CD8-positive, alpha-beta T cell (primary cell): ENCODE measurements at regions of chr10 and their contacts with region 1.

Region 1: GRCh38 chr10:95907456-95908253 is at the start of gene CC2D2B:
- DNase-seq: peak; percentile 21 to 79 (median 59)
- ATAC-seq: peak; percentile 72
- H3K4me3 ChIP-seq: peak within 1 kb of the TSS; percentile 77 to 82
- H3K4me3 Mint-ChIP-seq: peak within 1 kb of the TSS; percentile 90
- H3K27ac ChIP-seq: peak within 1 kb of the TSS; percentile 61 to 67
- H3K27ac Mint-ChIP-seq: peak within 1 kb of the TSS; percentile 83
- H3K4me1 ChIP-seq: no peaks in the 10 kb centered on the region
- H3K4me1 Mint-ChIP-seq: peaks cover 18% of the 10 kb centered on the region
- H3K27me3 ChIP-seq: no peaks in the 10 kb centered on the region
- H3K27me3 Mint-ChIP-seq: no peaks in the 10 kb centered on the region
- CTCF ChIP-seq: no peak
- total RNA-seq, gene CC2D2B: not detected

Region 2: GRCh38 chr10:95391581-95392216 is 516.0 kb before region 1 on chr10:
- CTCF ChIA-PET with region 1: no interaction called
- POLR2A ChIA-PET with region 1: no interaction called
- intact Hi-C with region 1: no loop called
- DNase-seq: no peak
- ATAC-seq: no peak
- H3K4me3 ChIP-seq: no peak overlapping the region
- H3K4me3 Mint-ChIP-seq: no peak overlapping the region
- H3K27ac ChIP-seq: no peak overlapping the region
- H3K27ac Mint-ChIP-seq: no peak overlapping the region
- H3K4me1 ChIP-seq: no peaks in the 10 kb centered on the region
- H3K4me1 Mint-ChIP-seq: no peaks in the 10 kb centered on the region
- H3K27me3 ChIP-seq: no peaks in the 10 kb centered on the region
- H3K27me3 Mint-ChIP-seq: peaks cover 2% of the 10 kb centered on the region
- CTCF ChIP-seq: no peak

Region 3: GRCh38 chr10:95998255-95998784 is 90.7 kb after region 1 on chr10:
- CTCF ChIA-PET with region 1: no interaction called
- POLR2A ChIA-PET with region 1: no interaction called
- intact Hi-C with region 1: no loop called
- DNase-seq: no peak
- ATAC-seq: no peak
- H3K4me3 ChIP-seq: no peak overlapping the region
- H3K4me3 Mint-ChIP-seq: no peak overlapping the region
- H3K27ac ChIP-seq: no peak overlapping the region
- H3K27ac Mint-ChIP-seq: no peak overlapping the region
- H3K4me1 ChIP-seq: no peaks in the 10 kb centered on the region
- H3K4me1 Mint-ChIP-seq: no peaks in the 10 kb centered on the region
- H3K27me3 ChIP-seq: no peaks in the 10 kb centered on the region
- H3K27me3 Mint-ChIP-seq: no peaks in the 10 kb centered on the region
- CTCF ChIP-seq: no peak

Region 4: DNA sequence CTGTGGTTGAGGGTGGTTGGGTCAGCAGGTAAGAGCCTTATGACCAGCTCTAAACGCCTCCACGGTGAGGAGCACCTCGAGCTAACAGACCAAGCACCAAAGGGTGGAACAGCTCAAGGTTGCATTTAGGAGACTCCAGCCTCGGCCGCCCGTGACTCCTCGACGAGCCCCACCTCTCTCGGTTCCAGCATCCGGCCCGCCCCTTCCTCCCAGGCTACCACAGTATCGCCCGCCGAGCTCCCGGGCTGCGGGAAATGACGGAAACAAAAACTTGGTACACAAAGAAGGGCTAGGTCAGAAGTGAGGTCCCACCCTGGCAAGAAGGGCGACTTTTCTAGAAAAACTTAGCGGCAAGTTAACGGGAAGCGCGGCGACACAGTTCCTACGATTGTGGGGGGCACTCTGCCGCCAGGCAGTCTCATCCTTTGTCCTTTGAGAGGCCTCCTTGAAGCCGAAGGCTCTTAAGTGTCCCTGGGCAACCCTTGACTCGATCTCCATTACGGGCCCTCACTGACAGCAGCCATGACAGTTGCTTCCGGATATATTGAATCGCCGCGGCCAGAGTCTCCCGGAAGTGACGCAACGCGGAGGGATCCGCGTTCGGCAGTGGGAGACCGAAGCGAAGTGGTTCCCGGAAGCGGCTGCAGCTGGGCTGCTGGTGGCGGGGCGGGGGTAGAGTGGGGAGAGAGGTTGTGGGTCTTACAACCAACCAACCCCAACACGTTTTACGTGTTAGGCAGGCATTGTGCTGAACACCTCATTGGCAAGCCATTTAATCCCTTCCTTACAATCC is 182.2 kb after region 1 on chr10:
- CTCF ChIA-PET with region 1: no interaction called
- POLR2A ChIA-PET with region 1: no interaction called
- intact Hi-C with region 1: loop called (anchors 5 kb)
- DNase-seq: peak; percentile 85 to 98 (median 92)
- ATAC-seq: peak; percentile 87
- H3K4me3 ChIP-seq: peak overlapping the region; percentile 69 to 71
- H3K4me3 Mint-ChIP-seq: peak overlapping the region; percentile 95
- H3K27ac ChIP-seq: peak overlapping the region; percentile 91 to 97
- H3K27ac Mint-ChIP-seq: peak overlapping the region; percentile 99
- H3K4me1 ChIP-seq: peaks cover 6% of the 10 kb centered on the region
- H3K4me1 Mint-ChIP-seq: peaks cover 12% of the 10 kb centered on the region
- H3K27me3 ChIP-seq: no peaks in the 10 kb centered on the region
- H3K27me3 Mint-ChIP-seq: peaks cover 21% of the 10 kb centered on the region
- CTCF ChIP-seq: no peak

Region 5: DNA sequence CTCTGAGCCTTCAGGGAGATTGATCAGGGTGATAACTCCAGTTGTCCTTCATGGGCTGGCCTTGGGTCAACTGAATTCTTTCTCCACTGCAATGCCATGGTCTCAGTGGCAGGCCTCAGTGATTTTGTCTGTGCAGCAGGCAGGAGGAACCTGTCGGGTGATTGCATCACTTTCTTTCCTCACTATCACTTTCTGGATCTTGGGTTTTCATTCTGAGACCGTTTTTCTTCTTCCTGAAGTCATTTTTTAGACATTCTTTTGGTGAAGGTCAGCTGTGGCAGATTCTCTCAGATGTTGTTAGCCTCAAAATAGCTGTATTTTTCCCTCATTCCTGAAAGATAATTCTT is 895.6 kb after region 1 on chr10:
- CTCF ChIA-PET with region 1: no interaction called
- POLR2A ChIA-PET with region 1: no interaction called
- intact Hi-C with region 1: no loop called
- DNase-seq: no peak
- ATAC-seq: no peak
- H3K4me3 ChIP-seq: no peak overlapping the region
- H3K4me3 Mint-ChIP-seq: no peak overlapping the region
- H3K27ac ChIP-seq: no peak overlapping the region
- H3K27ac Mint-ChIP-seq: no peak overlapping the region
- H3K4me1 ChIP-seq: no peaks in the 10 kb centered on the region
- H3K4me1 Mint-ChIP-seq: no peaks in the 10 kb centered on the region
- H3K27me3 ChIP-seq: peaks cover 0 to 3% of the 10 kb centered on the region in 2 experiments
- H3K27me3 Mint-ChIP-seq: peaks cover 10% of the 10 kb centered on the region
- CTCF ChIP-seq: no peak